Activated T-helper 2 cell treated with anti-CD3 and anti-CD28 coated beads, Interferon-gamma antibody, Interleukin-2, Interleukin-4, amounts not matched to agents 10 μg/mL and 5 μg/mL and 100 μg/mL, durations not matched to agents 14 hours and 24 hours and 36 hours (primary cell): ENCODE measurements at regions of chr22 and their contacts with region 1.

Region 1: GRCh38 chr22:43720716-43721115 is 91.4 kb downstream of the EFCAB6 start:
- DNase-seq: no peak
- H3K4me3 Mint-ChIP-seq: no peak overlapping the region
- H3K27ac Mint-ChIP-seq: no peak overlapping the region
- H3K4me1 Mint-ChIP-seq: no peaks in the 10 kb centered on the region
- H3K27me3 Mint-ChIP-seq: peaks cover 3% of the 10 kb centered on the region

Region 2: DNA sequence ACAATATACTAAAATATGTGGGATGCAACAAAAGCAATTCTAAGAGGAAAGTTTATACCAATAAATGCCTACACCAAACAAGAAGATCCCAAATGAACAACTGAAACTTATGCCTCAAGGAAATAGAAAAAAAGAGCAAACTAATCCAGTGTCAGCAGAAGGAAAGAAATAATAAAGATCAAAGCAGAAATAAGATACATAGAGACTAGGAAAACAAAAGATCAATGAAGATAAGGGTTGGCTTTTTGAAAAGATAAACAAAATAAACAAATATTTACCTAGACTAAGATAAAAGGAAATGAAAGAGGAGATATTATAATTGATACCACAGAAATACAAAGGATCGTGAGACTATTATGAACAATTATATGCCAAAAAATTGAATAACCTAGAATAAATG is 15.0 kb before region 1 on chr22:
- intact Hi-C with region 1: loop called (anchors 1 kb)
- DNase-seq: no peak
- H3K4me3 Mint-ChIP-seq: no peak overlapping the region
- H3K27ac Mint-ChIP-seq: no peak overlapping the region
- H3K4me1 Mint-ChIP-seq: no peaks in the 10 kb centered on the region
- H3K27me3 Mint-ChIP-seq: peaks cover 4% of the 10 kb centered on the region